CD8-positive, alpha-beta T cell (primary cell): ENCODE measurements at regions of chr16 and their contacts with region 1.

Region 1: DNA sequence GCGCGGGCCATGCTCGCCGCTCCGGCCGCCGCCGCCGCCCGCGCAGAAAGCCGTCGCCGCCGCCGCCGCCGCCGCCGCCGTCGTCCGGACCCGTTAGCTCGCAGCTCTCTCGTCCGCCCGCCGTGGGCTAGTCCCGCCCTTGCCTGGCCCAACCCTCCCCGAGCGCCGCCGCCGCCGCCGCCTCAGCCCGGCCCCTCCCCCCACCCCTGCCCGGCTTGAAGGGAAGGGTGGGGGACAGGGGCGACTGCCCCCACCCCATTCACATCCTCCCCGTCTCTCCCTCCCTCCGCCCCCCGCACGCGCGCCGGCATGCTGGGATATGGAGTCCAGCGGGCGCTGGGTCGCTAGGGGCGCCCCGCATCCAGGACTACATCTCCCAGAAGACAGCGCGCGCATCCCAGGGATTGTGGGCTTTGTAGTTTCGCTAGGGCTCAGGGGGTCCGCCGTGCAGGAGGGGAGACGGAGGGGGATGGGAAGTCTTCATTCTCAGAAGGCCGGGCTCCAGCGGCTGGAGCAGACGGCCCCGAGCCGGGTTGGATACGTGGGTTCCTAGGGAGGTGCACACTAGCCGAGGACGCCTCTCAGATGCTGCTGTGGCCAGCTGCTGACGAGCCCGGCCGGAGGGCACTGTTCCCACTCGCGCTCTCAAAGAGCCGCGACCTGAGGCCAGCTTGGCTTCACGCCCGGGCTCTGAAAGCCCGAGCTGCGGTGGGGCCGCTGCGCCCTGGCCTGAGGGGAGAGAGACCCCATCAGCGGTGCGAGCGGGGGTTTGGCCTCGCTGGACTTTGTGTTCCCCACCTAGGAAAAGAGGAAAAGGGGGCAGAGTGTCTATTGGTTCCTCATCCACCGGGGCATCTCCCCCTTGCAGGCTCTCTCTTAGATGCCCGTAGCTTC is at the start of gene ST3GAL2:
- DNase-seq: peak; percentile 87 to 97 (median 94)
- ATAC-seq: peak; percentile 97
- H3K4me3 ChIP-seq: peak within 1 kb of the TSS; percentile 75 to 91
- H3K4me3 Mint-ChIP-seq: peak within 1 kb of the TSS; percentile 94
- H3K27ac ChIP-seq: peak within 1 kb of the TSS; percentile 48 to 65
- H3K27ac Mint-ChIP-seq: peak within 1 kb of the TSS; percentile 89
- H3K4me1 ChIP-seq: peaks cover 36% of the 10 kb centered on the region
- H3K4me1 Mint-ChIP-seq: peaks cover 39% of the 10 kb centered on the region
- H3K27me3 ChIP-seq: no peaks in the 10 kb centered on the region
- H3K27me3 Mint-ChIP-seq: no peaks in the 10 kb centered on the region
- CTCF ChIP-seq: no peak
- total RNA-seq, gene ST3GAL2: 5.6 to 6.1 TPM

Region 2: DNA sequence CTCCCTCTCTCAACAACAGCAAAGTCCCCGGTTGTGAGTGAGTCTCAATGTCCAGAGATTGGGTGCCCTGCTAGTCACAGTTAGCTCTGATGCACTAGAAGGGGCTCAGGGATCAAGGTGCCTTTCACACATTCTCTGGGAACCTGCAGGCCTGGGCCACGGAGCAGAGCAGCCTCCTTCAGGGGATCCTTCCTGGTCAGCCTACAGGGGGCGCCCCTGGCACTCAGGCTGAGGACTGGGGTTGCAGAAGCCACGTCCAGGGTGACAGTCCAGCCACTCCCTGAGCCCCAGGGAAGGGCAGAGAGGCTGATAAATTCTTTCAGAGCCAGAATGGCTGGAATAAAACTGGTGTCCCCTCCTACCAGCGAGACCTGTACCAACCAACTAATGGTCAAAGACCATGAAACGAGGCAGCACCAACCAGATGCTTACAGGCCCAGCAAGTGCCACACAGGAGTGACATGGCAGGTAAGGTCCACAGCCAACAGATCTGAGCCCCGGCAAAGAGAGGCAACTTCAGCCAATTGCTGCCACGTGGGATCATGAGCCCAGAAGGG is 43.8 kb before region 1 on chr16:
- CTCF ChIA-PET with region 1: interaction called, 10 read pairs
- POLR2A ChIA-PET with region 1: interaction called, 4 read pairs
- intact Hi-C with region 1: loop called in 1 of 2 experiments (anchors 5 kb)
- DNase-seq: peak; percentile 21 to 76 (median 58)
- ATAC-seq: peak; percentile 70
- H3K4me3 ChIP-seq: no peak overlapping the region
- H3K4me3 Mint-ChIP-seq: no peak overlapping the region
- H3K27ac ChIP-seq: no peak overlapping the region
- H3K27ac Mint-ChIP-seq: no peak overlapping the region
- H3K4me1 ChIP-seq: no peaks in the 10 kb centered on the region
- H3K4me1 Mint-ChIP-seq: peaks cover 5% of the 10 kb centered on the region
- H3K27me3 ChIP-seq: no peaks in the 10 kb centered on the region
- H3K27me3 Mint-ChIP-seq: no peaks in the 10 kb centered on the region
- CTCF ChIP-seq: peak; percentile 48

Region 3: DNA sequence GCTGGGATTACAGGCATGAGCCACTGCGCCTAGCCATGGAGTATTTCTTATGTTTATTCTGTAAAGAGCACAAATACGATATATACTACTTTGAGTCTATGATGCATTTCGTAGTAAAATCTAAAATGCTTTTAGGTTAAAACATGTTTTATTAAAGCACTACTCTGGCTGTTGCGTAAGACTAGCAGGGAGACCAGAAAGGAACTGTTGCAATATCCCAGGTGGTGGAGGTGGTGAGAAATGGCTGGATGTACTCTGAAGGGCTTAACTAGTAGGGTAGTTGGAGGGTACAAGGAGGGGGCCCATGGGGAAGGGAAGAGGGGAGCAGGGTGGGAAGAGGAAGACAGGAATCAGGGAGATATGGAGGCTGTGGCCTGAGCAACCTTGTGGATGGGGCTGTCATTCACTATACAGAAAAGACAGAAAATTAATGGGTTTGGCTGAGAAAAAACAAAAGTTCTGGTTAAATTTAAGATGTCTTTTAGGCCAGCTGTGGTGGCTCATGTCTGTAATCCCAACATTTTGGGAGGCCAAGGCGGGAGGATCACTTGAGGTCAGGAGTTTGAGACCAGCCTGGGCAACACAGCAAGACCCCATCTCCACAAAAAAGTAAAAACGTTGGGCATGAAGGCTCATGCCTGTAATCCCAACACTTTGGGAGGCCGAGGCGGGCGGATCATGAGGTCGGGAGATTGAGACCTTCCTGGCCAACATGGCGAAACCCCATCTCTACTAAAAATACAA is 36.1 kb before region 1 on chr16:
- CTCF ChIA-PET with region 1: no interaction called
- POLR2A ChIA-PET with region 1: interaction called, 3 read pairs
- intact Hi-C with region 1: loop called in 1 of 2 experiments (anchors 5 kb)
- DNase-seq: no peak
- ATAC-seq: no peak
- H3K4me3 ChIP-seq: no peak overlapping the region
- H3K4me3 Mint-ChIP-seq: no peak overlapping the region
- H3K27ac ChIP-seq: no peak overlapping the region
- H3K27ac Mint-ChIP-seq: peak overlapping the region; percentile 25
- H3K4me1 ChIP-seq: peaks cover 35% of the 10 kb centered on the region
- H3K4me1 Mint-ChIP-seq: peaks cover 46% of the 10 kb centered on the region
- H3K27me3 ChIP-seq: no peaks in the 10 kb centered on the region
- H3K27me3 Mint-ChIP-seq: no peaks in the 10 kb centered on the region
- CTCF ChIP-seq: no peak

Region 4: DNA sequence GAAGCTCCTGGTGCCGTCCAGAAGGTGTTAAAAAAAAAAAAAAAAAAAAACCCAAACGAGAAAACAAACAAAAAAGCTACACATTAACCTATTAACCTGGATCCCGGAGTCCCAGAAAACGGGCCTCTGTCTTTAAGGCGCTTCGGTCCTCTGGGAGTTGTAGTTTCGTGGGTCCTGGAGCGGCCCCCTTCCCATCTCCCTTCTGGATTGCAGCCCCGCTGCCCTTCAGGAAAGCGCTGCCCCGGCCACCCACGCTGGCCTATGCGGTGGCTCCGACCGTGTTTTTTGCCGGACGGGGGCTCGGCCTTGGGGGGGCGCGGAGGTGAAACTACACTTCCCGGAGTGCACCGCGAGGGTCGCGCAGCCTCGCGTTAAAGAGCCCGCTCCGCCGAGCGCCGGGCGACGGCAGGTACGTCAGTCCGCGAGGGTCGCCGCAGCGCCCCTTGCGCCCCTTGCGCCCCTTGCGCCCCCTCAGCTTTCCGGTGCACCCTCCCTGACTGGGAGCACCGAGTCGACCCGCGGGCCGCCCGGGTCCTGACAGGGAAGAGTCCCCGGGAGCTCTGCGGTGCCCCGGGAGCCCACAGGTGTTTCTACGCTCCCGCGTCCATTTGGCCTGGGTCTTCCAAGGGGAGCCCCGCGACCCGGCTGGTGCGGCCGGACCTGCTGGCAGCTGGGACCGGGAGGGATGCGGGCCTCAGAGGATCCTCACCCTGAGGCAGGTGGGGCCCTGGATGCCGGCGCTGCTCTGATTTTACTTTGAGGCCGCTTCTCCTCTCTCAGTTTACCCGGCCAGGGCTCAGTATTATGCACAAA is 15.2 kb after region 1 on chr16 and contains the start of gene FCSK:
- CTCF ChIA-PET with region 1: no interaction called
- POLR2A ChIA-PET with region 1: interaction called, 15 read pairs
- intact Hi-C with region 1: loop called (anchors 1 kb)
- DNase-seq: peak; percentile 50 to 85 (median 70)
- ATAC-seq: peak; percentile 90
- H3K4me3 ChIP-seq: peak within 1 kb of the TSS; percentile 98 to 100
- H3K4me3 Mint-ChIP-seq: peak within 1 kb of the TSS; percentile 90
- H3K27ac ChIP-seq: peak within 1 kb of the TSS; percentile 76 to 97
- H3K27ac Mint-ChIP-seq: peak within 1 kb of the TSS; percentile 88
- H3K4me1 ChIP-seq: peaks cover 20% of the 10 kb centered on the region
- H3K4me1 Mint-ChIP-seq: peaks cover 27% of the 10 kb centered on the region
- H3K27me3 ChIP-seq: no peaks in the 10 kb centered on the region
- H3K27me3 Mint-ChIP-seq: no peaks in the 10 kb centered on the region
- CTCF ChIP-seq: no peak
- total RNA-seq, gene FCSK: 17.8 to 18.2 TPM